ENCODE measurements at regions of chr15 and their contacts with region 1.

Region 1: DNA sequence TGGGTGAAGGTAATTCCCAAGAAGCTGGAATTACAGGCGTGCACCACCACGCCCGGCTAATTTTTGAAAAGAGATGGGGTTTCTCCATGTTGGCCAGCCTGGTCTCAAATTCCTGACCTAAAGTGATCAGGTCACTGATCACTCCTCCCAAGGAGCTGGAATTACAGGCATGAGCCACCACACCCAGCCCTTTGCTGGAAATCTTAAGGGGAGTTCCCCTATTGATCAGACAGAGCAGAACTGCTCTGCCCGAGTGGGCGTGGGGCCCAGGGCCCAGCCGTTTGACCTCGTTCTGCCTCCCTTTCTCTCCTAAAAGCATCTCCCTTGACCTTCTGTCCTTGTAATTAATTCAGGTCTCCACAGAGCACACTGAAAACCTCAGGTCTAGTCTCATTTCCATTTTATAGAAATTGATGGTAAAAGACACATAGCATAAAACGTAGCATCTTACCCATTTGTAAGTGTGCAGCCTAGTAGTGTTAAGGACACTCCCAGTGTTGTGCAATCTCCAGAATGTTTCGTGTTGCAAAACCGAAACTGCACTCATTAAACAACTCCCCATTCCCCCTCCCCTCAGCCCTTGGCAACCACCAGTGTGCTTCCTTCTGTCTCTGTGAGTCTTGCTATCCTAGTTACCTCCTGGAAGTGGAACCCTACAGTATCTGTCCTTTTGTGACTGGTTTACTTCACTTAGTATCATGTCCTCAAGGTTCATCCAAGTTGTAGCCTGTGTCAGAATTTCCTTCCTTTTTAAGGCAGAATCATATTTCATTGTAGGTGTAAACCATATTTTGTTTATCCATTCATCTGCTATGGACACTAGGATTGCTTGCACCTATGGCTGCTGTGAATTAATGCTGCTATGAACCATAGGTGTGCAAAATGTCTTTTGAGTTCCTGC is 89.4 kb downstream of the SLCO3A1 start:
- DNase-seq: peak; percentile 79 to 97
- H3K4me3 ChIP-seq: peak overlapping the region; percentile 51
- H3K27ac ChIP-seq: peak overlapping the region; percentile 100
- H3K4me1 ChIP-seq: peaks cover 83% of the 10 kb centered on the region
- H3K27me3 ChIP-seq: no peaks in the 10 kb centered on the region
- CTCF ChIP-seq: no peak

Region 2: GRCh38 chr15:91456251-91456738 is 486.6 kb before region 1 on chr15:
- CTCF ChIA-PET with region 1: no interaction called
- POLR2A ChIA-PET with region 1: no interaction called
- intact Hi-C with region 1: loop called (anchors 1 kb)
- DNase-seq: peak; percentile 91 to 98
- H3K4me3 ChIP-seq: peak overlapping the region; percentile 39; the same call in 1 of the 2 replicates
- H3K27ac ChIP-seq: peak overlapping the region; percentile 99
- H3K4me1 ChIP-seq: peaks cover 31% of the 10 kb centered on the region
- H3K27me3 ChIP-seq: no peaks in the 10 kb centered on the region
- CTCF ChIP-seq: no peak

Region 3: GRCh38 chr15:91852741-91853510 is 90.0 kb before region 1 on chr15:
- CTCF ChIA-PET with region 1: interaction called, 5 read pairs
- POLR2A ChIA-PET with region 1: interaction called, 3 read pairs
- intact Hi-C with region 1: loop called (anchors 1 kb)
- DNase-seq: peak; percentile 46 to 74
- H3K4me3 ChIP-seq: peak overlapping the region; percentile 86
- H3K27ac ChIP-seq: peak overlapping the region; percentile 74
- H3K4me1 ChIP-seq: peaks cover 44% of the 10 kb centered on the region
- H3K27me3 ChIP-seq: no peaks in the 10 kb centered on the region
- CTCF ChIP-seq: peak; percentile 72

Region 4: DNA sequence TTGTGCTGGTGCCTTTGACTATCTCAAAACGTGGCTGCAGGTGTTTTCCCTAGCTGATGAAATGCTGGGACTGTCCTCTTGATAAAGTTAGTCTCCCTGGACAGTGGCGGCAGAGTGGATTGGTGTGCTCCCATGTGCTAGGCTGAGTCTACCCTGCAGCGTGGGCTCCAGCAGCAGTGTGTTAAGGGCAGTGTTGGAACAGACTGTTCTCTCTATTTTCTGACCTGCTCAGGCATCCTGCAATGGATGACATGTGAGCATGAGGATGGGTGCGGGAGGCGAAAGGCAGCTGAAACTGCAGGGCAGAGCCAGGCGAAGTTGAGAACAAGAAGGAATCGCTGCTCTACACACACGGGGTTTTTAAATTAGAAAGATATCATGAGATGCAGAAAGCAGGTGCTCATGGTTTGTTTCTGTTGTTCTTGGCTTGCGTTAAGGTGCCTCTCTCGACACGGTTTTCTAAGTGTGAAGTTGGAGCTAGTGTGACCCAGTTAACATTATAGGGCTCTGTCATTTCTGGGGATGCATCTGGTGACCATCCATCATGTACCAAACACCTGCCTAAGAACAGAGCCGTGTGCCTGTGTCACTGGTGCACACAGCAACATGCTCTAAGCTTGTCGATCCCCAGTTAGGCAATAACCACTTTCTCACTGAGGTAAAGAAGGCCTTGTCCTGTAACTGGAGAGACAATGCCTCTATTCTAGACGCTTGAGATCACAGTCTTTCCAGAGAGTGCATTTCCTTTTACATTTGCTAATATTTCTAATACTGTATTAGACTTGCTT is 45.1 kb before region 1 on chr15:
- CTCF ChIA-PET with region 1: no interaction called
- POLR2A ChIA-PET with region 1: interaction called, 26 read pairs
- intact Hi-C with region 1: no loop called
- DNase-seq: no peak
- H3K4me3 ChIP-seq: no peak overlapping the region
- H3K27ac ChIP-seq: no peak overlapping the region
- H3K4me1 ChIP-seq: no peaks in the 10 kb centered on the region
- H3K27me3 ChIP-seq: no peaks in the 10 kb centered on the region
- CTCF ChIP-seq: no peak

Region 5: DNA sequence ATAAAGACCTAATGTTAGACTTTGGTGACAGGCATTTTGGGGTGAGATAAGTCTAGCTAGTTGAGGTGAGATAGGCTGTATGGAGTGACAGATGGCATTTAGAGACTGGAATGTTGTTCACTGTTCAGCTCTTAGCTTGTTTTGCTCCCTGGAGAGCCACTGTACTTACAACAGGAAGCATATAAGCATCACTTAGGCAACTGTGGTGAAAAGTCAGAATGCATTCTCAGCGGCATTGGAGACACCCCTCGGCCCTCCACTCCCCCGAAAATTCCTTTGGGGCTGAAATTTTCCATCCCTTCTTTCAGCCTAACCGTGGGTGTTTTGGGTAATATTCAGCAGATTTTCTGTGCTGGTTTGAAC is 16.0 kb before region 1 on chr15:
- CTCF ChIA-PET with region 1: no interaction called
- POLR2A ChIA-PET with region 1: no interaction called
- intact Hi-C with region 1: no loop called
- DNase-seq: no peak
- H3K4me3 ChIP-seq: no peak overlapping the region
- H3K27ac ChIP-seq: no peak overlapping the region
- H3K4me1 ChIP-seq: 0 out of 2 replicates have a peak, but pooled peaks cover under 1% of the 10 kb centered on the region
- H3K27me3 ChIP-seq: no peaks in the 10 kb centered on the region
- CTCF ChIP-seq: no peak

Region 6: GRCh38 chr15:92069308-92070250 is 126.7 kb after region 1 on chr15:
- CTCF ChIA-PET with region 1: interaction called, 6 read pairs
- POLR2A ChIA-PET with region 1: no interaction called
- intact Hi-C with region 1: loop called (anchors 1 kb)
- DNase-seq: peak; percentile 81 to 92
- H3K4me3 ChIP-seq: peak overlapping the region; percentile 51; the same call in 1 of the 2 replicates
- H3K27ac ChIP-seq: peak overlapping the region; percentile 96
- H3K4me1 ChIP-seq: peaks cover 38% of the 10 kb centered on the region
- H3K27me3 ChIP-seq: no peaks in the 10 kb centered on the region
- CTCF ChIP-seq: no peak

Region 7: GRCh38 chr15:92881802-92882696 is 939.1 kb after region 1 on chr15:
- CTCF ChIA-PET with region 1: no interaction called
- POLR2A ChIA-PET with region 1: interaction called, 21 read pairs
- intact Hi-C with region 1: no loop called
- DNase-seq: peak; percentile 97 to 98
- H3K4me3 ChIP-seq: peak overlapping the region; percentile 58
- H3K27ac ChIP-seq: peak overlapping the region; percentile 74
- H3K4me1 ChIP-seq: peaks cover 42% of the 10 kb centered on the region
- H3K27me3 ChIP-seq: no peaks in the 10 kb centered on the region
- CTCF ChIP-seq: no peak

Region 8: GRCh38 chr15:93030430-93031105 is 1087.6 kb after region 1 on chr15:
- CTCF ChIA-PET with region 1: no interaction called
- POLR2A ChIA-PET with region 1: no interaction called
- intact Hi-C with region 1: no loop called
- DNase-seq: peak; percentile 61 to 68
- H3K4me3 ChIP-seq: no peak overlapping the region
- H3K27ac ChIP-seq: no peak overlapping the region
- H3K4me1 ChIP-seq: no peaks in the 10 kb centered on the region
- H3K27me3 ChIP-seq: no peaks in the 10 kb centered on the region
- CTCF ChIP-seq: peak; percentile 89

Measured in PC-9 (cell line).